Sigmoid colon (tissue), 7 donors: ENCODE measurements at regions of chr6 and their contacts with region 1.

Region 1: GRCh38 chr6:107459283-107460082 is at the start of gene PDSS2:
- DNase-seq: peak; percentile 97
- H3K4me3 ChIP-seq: peak within 1 kb of the TSS; percentile 66 to 81 (median 72)
- H3K27ac ChIP-seq: peak within 1 kb of the TSS; percentile 81 to 89 (median 86)
- H3K4me1 ChIP-seq: peaks cover 0 to 13% (median 8%) of the 10 kb centered on the region in 4 donors
- H3K27me3 ChIP-seq: no peaks in the 10 kb centered on the region
- CTCF ChIP-seq: peak in 2 of 4 experiments; percentile 23
- EP300 ChIP-seq: no peak
- POLR2A ChIP-seq: peak in 1 of 2 donors; percentile 80
- total RNA-seq, gene PDSS2: 9.4 to 11.1 (median 9.6) TPM

Region 2: GRCh38 chr6:106629103-106629858 is 830.2 kb before region 1 on chr6 and contains the starts of genes QRSL1 and RTN4IP1:
- intact Hi-C with region 1: no loop called
- DNase-seq: peak; percentile 91
- H3K4me3 ChIP-seq: peak within 1 kb of the TSS; percentile 72 to 91 (median 77)
- H3K27ac ChIP-seq: peak within 1 kb of the TSS; percentile 75 to 87 (median 83)
- H3K4me1 ChIP-seq: peaks cover 0 to 20% (median 14%) of the 10 kb centered on the region in 4 donors
- H3K27me3 ChIP-seq: no peaks in the 10 kb centered on the region
- CTCF ChIP-seq: no peak
- EP300 ChIP-seq: no peak
- POLR2A ChIP-seq: no peak
- total RNA-seq, gene QRSL1: 8.3 to 11.7 (median 9.9) TPM
- total RNA-seq, gene RTN4IP1: 2.2 to 7.1 (median 3.9) TPM

Region 3: DNA sequence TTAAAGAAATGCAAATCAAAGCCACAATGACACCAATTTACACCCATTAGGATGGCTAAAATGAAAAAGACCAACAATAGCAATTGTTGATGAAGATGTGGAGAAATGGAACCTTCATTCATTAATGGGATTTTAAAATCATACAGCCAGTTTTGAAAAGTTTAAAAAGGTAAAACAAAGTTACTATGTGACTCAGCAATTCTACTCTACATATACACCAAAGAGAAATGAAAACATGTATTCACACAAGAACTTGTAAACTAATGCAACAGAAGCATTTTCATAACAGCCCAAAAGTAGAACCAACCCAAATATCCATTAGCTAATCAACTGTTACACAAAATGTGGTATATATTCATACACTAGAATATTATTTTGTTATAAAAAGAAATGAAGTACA is 75.8 kb before region 1 on chr6:
- intact Hi-C with region 1: no loop called
- DNase-seq: no peak
- H3K4me3 ChIP-seq: no peak overlapping the region
- H3K27ac ChIP-seq: no peak overlapping the region
- H3K4me1 ChIP-seq: no peaks in the 10 kb centered on the region
- H3K27me3 ChIP-seq: no peaks in the 10 kb centered on the region
- CTCF ChIP-seq: no peak
- EP300 ChIP-seq: no peak
- POLR2A ChIP-seq: no peak

Region 4: DNA sequence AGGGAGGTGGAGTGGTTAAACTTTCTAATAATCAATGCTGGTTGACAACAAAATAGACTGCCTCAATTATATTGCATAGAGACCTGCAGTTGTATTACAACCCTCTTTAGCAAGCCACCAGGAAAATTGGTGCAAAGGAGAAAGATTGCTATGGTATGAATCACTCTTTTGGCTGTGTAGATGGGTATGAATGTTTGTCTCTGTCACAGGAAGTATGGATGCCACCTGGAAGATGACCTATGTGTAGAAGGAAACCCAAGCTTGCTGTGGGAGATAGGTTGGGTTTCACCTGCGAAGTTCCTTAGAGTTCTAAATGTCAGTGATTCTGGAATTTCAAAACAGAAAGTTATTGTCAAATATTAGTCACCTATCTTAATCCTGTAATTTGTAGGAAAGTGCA is 165.1 kb after region 1 on chr6:
- intact Hi-C with region 1: no loop called
- DNase-seq: no peak
- H3K4me3 ChIP-seq: no peak overlapping the region
- H3K27ac ChIP-seq: no peak overlapping the region
- H3K4me1 ChIP-seq: peaks cover 0 to 23% (median 17%) of the 10 kb centered on the region in 4 donors
- H3K27me3 ChIP-seq: no peaks in the 10 kb centered on the region
- CTCF ChIP-seq: no peak
- EP300 ChIP-seq: no peak
- POLR2A ChIP-seq: no peak

Region 5: GRCh38 chr6:107657755-107658461 is 198.4 kb after region 1 on chr6:
- intact Hi-C with region 1: loop called (anchors 10 kb)
- DNase-seq: peak; percentile 88
- H3K4me3 ChIP-seq: peak overlapping the region in 2 of 4 donors; percentile 4 to 20
- H3K27ac ChIP-seq: peak overlapping the region; percentile 18 to 74 (median 54)
- H3K4me1 ChIP-seq: peaks cover 0 to 22% (median 17%) of the 10 kb centered on the region in 4 donors
- H3K27me3 ChIP-seq: no peaks in the 10 kb centered on the region
- CTCF ChIP-seq: peak in 3 of 4 experiments; percentile 8 to 43 (median 20)
- EP300 ChIP-seq: no peak
- POLR2A ChIP-seq: no peak